Kidney (tissue), 22 donors: ENCODE measurements at regions of chr20 and their contacts with region 1.

Region 1: GRCh38 chr20:44193801-44194200 is 6.8 kb upstream of the JPH2 start:
- DNase-seq: no peak
- H3K4me3 ChIP-seq: no peak overlapping the region
- H3K27ac ChIP-seq: no peak overlapping the region
- H3K4me1 ChIP-seq: no peaks in the 10 kb centered on the region
- H3K27me3 ChIP-seq: no peaks in the 10 kb centered on the region
- CTCF ChIP-seq: no peak

Region 2: GRCh38 chr20:44115762-44116644 is 77.8 kb before region 1 on chr20:
- intact Hi-C with region 1: loop called (anchors 5 kb)
- DNase-seq: no peak
- H3K4me3 ChIP-seq: no peak overlapping the region
- H3K27ac ChIP-seq: no peak overlapping the region
- H3K4me1 ChIP-seq: no peaks in the 10 kb centered on the region
- H3K27me3 ChIP-seq: no peaks in the 10 kb centered on the region
- CTCF ChIP-seq: no peak